GM12878 (cell line): ENCODE measurements at regions of chr18 and their contacts with region 1.

Region 1: DNA sequence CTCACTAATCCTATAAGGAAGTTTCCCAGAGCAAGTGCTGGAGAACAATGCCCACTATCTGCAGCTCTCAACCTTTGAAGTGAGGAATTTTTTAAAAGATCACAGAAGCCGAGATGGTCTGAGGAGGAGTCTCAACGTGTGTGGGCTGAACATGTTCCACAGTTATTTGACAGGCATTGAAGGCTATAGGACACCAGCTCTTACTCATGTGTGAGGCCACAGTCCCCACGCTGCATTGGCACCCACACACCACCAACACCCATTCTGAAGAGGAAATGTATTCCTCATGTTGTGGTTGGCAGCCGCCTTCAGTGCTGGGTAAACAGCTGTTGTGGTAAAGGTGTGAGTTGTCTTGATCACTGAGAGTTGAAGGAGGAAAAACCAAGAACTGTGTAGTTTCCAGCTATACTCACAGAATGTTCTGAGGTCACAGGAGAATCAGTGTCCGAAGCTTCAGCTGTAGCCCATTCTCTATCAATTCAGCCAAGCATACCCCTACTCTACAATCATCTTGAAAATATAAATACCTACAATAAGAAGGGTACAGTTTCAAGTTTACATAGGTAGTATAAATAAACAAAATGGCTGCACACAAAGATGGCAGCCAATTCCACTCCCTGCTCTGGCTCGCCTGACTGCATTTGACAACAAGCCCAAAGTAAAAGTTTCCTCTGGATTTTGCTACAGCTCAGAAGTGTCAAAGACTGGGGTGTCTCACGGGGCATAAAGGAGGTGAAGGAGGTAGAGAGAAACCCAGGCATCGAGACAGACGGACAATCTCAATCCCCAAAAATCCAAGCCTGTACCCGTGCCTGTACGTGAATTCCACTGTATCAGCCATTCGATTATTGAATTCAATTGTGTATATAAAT is 12.1 kb downstream of the CD226 start:
- DNase-seq: peak; percentile 89
- ATAC-seq: peak; percentile 92
- H3K4me3 ChIP-seq: no peak overlapping the region
- H3K27ac ChIP-seq: peak overlapping the region; percentile 88
- H3K4me1 ChIP-seq: peaks cover 40% of the 10 kb centered on the region
- H3K27me3 ChIP-seq: no peaks in the 10 kb centered on the region
- CTCF ChIP-seq: no peak
- EP300 ChIP-seq: peak; percentile 89 to 94
- POLR2A ChIP-seq: peak; percentile 57
- RAD21 ChIP-seq: no peak

Region 2: DNA sequence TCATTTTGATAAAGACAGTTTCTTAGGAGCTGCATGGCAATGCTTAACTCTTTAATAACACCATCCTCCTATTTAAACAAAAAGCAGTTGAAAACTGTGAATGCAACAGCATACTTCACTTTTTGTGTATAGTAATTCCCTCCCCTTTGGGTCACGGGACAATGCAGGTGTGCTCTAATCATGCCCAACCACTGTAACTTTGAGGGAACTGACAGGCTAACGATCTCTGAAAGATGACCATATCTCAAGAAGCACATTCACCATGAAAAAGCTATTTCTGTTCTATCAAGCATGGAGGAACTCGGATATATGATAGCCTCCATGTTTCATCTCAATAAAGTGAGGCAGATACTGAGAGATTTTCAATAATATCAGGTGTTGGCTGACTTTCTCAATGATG is 93.2 kb after region 1 on chr18:
- CTCF ChIA-PET with region 1: no interaction called
- POLR2A ChIA-PET with region 1: no interaction called
- RAD21 ChIA-PET with region 1: interaction called, 3 read pairs
- SMC1A ChIA-PET with region 1: interaction called, 10 read pairs
- in situ Hi-C with region 1: no loop called
- intact Hi-C with region 1: no loop called
- DNase-seq: peak; percentile 27
- ATAC-seq: peak; percentile 88
- H3K4me3 ChIP-seq: no peak overlapping the region
- H3K27ac ChIP-seq: no peak overlapping the region; the same call in 1 of the 2 replicates
- H3K4me1 ChIP-seq: peaks cover 7% of the 10 kb centered on the region; the same call in 1 of the 2 replicates
- H3K27me3 ChIP-seq: no peaks in the 10 kb centered on the region
- CTCF ChIP-seq: no peak
- EP300 ChIP-seq: 0 out of 4 replicates have a peak, but pooled peaks of 1 of the 2 experiments have one; percentile 29
- POLR2A ChIP-seq: no peak
- RAD21 ChIP-seq: no peak